Activated CD8-positive, alpha-beta T cell treated with anti-CD3 and anti-CD28 coated beads, Interleukin-2, amount 10 ng/mL, durations not matched to agents 7 days and 5 days (primary cell): ENCODE measurements at regions of chr3 and their contacts with region 1.

Region 1: DNA sequence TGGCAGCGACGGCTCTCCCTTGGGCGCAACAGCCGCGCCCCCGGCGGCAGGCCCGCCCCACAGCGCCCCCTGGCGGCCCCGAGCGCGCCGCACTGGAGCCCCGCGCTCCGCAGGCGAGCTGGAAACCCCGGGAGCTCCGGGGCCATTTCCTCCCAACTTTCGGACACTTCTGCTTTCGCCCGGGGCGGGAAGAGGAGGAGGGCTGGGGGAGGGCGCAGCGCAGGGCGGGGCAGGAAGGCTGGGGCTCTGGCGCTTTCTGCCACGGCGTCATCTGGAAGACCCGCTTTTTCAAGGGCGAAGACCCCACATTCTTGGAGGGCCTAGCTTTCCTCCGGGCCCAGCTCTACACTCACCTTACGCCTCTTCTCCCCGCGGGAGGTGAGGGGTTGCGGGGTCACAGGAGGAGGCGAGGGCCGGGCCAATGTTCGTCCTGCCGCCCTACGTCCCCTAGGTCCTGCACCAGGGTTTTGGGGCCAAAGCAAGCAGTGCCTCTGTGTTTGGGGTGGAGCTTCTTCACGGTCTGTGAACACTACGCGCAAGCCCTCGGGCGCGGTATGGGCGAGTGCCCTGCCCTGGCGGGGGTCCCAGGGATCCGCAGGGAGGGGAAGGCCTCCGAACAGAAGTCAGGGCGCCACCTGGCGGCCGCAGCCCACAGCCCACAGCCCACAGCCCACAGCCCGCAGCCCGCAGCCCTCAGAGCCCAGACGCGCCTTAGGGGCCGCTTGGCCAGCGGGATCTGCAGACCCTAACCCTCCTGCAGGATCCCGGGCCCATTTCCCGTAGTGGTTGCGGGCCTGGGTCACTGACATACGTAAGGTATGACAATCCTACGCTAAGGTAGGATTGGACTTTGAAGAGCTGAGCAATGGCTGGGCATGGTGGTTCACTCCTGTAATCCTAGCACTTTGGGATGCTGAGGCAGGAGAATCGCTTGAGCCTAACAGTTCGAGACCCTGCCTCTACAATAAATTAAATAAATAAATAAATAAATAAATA is 31.1 kb downstream of the FOXL2 start:
- DNase-seq: peak; percentile 81
- ATAC-seq: peak; percentile 87
- H3K4me3 Mint-ChIP-seq: peak overlapping the region; percentile 71
- H3K27ac Mint-ChIP-seq: peak overlapping the region; percentile 74
- H3K4me1 Mint-ChIP-seq: peaks cover 5% of the 10 kb centered on the region
- H3K27me3 Mint-ChIP-seq: peaks cover 27% of the 10 kb centered on the region

Region 2: GRCh38 chr3:138479438-138479863 is 436.4 kb before region 1 on chr3:
- CTCF ChIA-PET with region 1: interaction called, 41 read pairs
- POLR2A ChIA-PET with region 1: no interaction called
- DNase-seq: peak; percentile 60
- ATAC-seq: peak; percentile 42
- H3K4me3 Mint-ChIP-seq: no peak overlapping the region
- H3K27ac Mint-ChIP-seq: no peak overlapping the region
- H3K4me1 Mint-ChIP-seq: no peaks in the 10 kb centered on the region
- H3K27me3 Mint-ChIP-seq: peaks cover 8% of the 10 kb centered on the region

Region 3: GRCh38 chr3:138594150-138594934 is 321.5 kb before region 1 on chr3 and contains the start of gene CEP70:
- CTCF ChIA-PET with region 1: interaction called, 137 read pairs
- POLR2A ChIA-PET with region 1: interaction called, 10 read pairs
- DNase-seq: peak; percentile 93
- ATAC-seq: peak; percentile 96
- H3K4me3 Mint-ChIP-seq: peak within 1 kb of the TSS; percentile 86
- H3K27ac Mint-ChIP-seq: peak within 1 kb of the TSS; percentile 87
- H3K4me1 Mint-ChIP-seq: peaks cover 12% of the 10 kb centered on the region
- H3K27me3 Mint-ChIP-seq: no peaks in the 10 kb centered on the region
- total RNA-seq, gene CEP70: 15.9 to 19.5 TPM

Region 4: GRCh38 chr3:138686771-138687221 is 229.0 kb before region 1 on chr3:
- CTCF ChIA-PET with region 1: interaction called, 67 read pairs
- POLR2A ChIA-PET with region 1: no interaction called
- DNase-seq: no peak
- ATAC-seq: no peak
- H3K4me3 Mint-ChIP-seq: no peak overlapping the region
- H3K27ac Mint-ChIP-seq: no peak overlapping the region
- H3K4me1 Mint-ChIP-seq: peaks cover 8% of the 10 kb centered on the region
- H3K27me3 Mint-ChIP-seq: no peaks in the 10 kb centered on the region

Region 5: GRCh38 chr3:138786788-138787278 is 129.0 kb before region 1 on chr3:
- CTCF ChIA-PET with region 1: interaction called, 10 read pairs
- POLR2A ChIA-PET with region 1: no interaction called
- DNase-seq: no peak
- ATAC-seq: no peak
- H3K4me3 Mint-ChIP-seq: no peak overlapping the region
- H3K27ac Mint-ChIP-seq: no peak overlapping the region
- H3K4me1 Mint-ChIP-seq: peaks cover 14% of the 10 kb centered on the region
- H3K27me3 Mint-ChIP-seq: no peaks in the 10 kb centered on the region

Region 6: DNA sequence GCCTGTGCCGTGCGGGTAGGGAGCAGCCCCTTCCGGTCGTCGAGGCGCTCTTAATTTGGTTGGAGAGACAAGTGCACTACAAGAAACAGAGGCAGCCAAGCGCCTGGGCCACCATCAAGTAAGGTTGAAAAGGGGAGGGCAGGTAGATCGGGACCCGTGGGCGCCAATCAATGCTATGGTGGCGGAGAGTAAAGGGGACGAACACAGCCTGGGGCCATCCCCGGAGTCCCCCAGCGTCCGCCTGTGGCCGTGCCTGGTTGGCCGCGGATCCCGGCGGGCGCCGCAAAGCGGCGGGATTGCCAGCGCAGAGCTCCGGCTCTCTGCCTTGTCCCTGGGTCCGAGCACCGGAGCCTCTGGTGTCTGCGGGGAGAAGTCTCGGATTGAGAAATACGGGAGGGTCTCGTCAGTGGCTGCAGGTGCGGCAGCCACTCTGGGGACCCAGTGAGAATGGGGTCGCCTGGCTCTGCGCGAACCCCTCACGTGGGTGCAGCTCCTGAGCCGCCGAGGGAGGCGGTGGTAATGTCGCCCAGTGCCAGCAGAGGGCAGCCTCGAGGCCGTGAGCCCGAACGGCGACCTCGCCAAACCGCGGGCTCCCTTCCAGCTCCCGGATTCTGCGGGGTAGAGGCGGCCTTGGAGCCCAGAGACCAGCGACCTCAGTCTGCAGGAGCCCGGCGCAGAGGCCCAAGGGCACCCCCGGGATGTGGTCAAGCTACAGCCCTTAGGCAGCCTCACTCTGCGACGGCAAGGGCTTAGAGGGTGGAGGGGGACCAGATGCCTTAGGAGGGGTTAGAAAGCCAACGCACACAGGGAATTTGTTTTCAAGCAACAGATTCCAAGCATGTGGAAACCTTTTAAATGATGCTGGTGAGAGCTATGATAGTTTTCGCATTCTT is 20.3 kb after region 1 on chr3:
- CTCF ChIA-PET with region 1: interaction called, 13 read pairs
- POLR2A ChIA-PET with region 1: no interaction called
- DNase-seq: peak; percentile 65
- ATAC-seq: peak; percentile 78
- H3K4me3 Mint-ChIP-seq: peak overlapping the region; percentile 61
- H3K27ac Mint-ChIP-seq: no peak overlapping the region
- H3K4me1 Mint-ChIP-seq: peaks cover 33% of the 10 kb centered on the region
- H3K27me3 Mint-ChIP-seq: peaks cover 68% of the 10 kb centered on the region

Region 7: DNA sequence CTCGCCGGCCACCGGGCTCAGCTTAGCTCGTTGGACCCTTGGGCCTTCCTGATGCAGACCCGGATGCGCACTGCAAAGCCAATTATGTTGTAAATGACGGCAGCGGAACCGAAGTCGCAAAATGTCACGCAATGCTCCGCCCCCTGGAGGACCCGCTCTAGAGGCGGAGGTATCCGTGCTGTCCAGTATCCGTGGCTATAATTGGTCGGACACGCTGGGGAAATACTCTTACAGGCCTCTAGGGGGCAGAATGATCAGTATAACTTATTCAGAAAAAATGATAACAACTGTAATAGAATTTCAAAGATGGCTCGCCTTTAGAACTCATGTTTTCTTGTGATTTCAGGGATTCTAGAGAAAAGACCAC is 105.0 kb after region 1 on chr3 and contains the start of gene PRR23B:
- CTCF ChIA-PET with region 1: no interaction called
- POLR2A ChIA-PET with region 1: no interaction called
- DNase-seq: no peak
- ATAC-seq: no peak
- H3K4me3 Mint-ChIP-seq: no peak within 1 kb of the TSS
- H3K27ac Mint-ChIP-seq: no peak within 1 kb of the TSS
- H3K4me1 Mint-ChIP-seq: no peaks in the 10 kb centered on the region
- H3K27me3 Mint-ChIP-seq: no peaks in the 10 kb centered on the region
- total RNA-seq, gene PRR23B: not detected

Region 8: GRCh38 chr3:139088462-139089324 is 172.9 kb after region 1 on chr3:
- CTCF ChIA-PET with region 1: no interaction called
- POLR2A ChIA-PET with region 1: no interaction called
- DNase-seq: no peak
- ATAC-seq: no peak
- H3K4me3 Mint-ChIP-seq: no peak overlapping the region
- H3K27ac Mint-ChIP-seq: no peak overlapping the region
- H3K4me1 Mint-ChIP-seq: no peaks in the 10 kb centered on the region
- H3K27me3 Mint-ChIP-seq: peaks cover 11% of the 10 kb centered on the region

Region 9: DNA sequence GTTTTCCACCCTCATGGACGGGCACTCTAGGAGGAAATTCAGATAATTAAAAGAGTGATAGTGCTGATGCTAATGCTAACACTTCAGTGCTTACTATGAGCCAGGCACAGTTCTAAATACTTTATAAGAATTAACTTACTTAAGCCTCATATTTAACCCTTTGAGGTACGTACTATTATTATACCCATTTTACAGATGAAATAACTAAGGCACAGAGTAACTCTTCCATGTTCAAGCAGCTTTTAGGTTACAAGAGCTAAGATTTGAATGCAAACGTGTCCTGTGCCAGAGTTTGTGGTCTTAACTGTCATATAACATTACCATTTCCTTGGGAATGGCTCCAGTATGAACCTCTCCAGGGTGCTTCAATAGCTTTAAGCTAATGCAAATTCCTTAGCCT is 243.6 kb after region 1 on chr3:
- CTCF ChIA-PET with region 1: no interaction called
- POLR2A ChIA-PET with region 1: no interaction called
- DNase-seq: no peak
- ATAC-seq: no peak
- H3K4me3 Mint-ChIP-seq: no peak overlapping the region
- H3K27ac Mint-ChIP-seq: no peak overlapping the region
- H3K4me1 Mint-ChIP-seq: no peaks in the 10 kb centered on the region
- H3K27me3 Mint-ChIP-seq: no peaks in the 10 kb centered on the region